MCF 10A (cell line): ENCODE measurements at regions of chr4 and their contacts with region 1.

Region 1: GRCh38 chr4:85084380-85085094 is 118.0 kb upstream of the WDFY3 start:
- DNase-seq: peak; percentile 80
- H3K4me3 Mint-ChIP-seq: no peak overlapping the region
- H3K27ac Mint-ChIP-seq: no peak overlapping the region
- H3K4me1 Mint-ChIP-seq: no peaks in the 10 kb centered on the region
- H3K27me3 Mint-ChIP-seq: no peaks in the 10 kb centered on the region
- CTCF ChIP-seq: peak; percentile 67

Region 2: GRCh38 chr4:85102606-85103005 is 18.1 kb after region 1 on chr4:
- CTCF ChIA-PET with region 1: interaction called, 21 read pairs
- POLR2A ChIA-PET with region 1: no interaction called
- intact Hi-C with region 1: no loop called
- DNase-seq: no peak
- H3K4me3 Mint-ChIP-seq: no peak overlapping the region
- H3K27ac Mint-ChIP-seq: no peak overlapping the region
- H3K4me1 Mint-ChIP-seq: peaks cover 6% of the 10 kb centered on the region
- H3K27me3 Mint-ChIP-seq: no peaks in the 10 kb centered on the region
- CTCF ChIP-seq: no peak

Region 3: GRCh38 chr4:85147439-85148076 is 63.0 kb after region 1 on chr4:
- CTCF ChIA-PET with region 1: interaction called, 23 read pairs
- POLR2A ChIA-PET with region 1: no interaction called
- intact Hi-C with region 1: loop called (anchors 2 kb)
- DNase-seq: peak; percentile 74
- H3K4me3 Mint-ChIP-seq: no peak overlapping the region
- H3K27ac Mint-ChIP-seq: no peak overlapping the region
- H3K4me1 Mint-ChIP-seq: peaks cover 11% of the 10 kb centered on the region
- H3K27me3 Mint-ChIP-seq: no peaks in the 10 kb centered on the region
- CTCF ChIP-seq: peak; percentile 68

Region 4: DNA sequence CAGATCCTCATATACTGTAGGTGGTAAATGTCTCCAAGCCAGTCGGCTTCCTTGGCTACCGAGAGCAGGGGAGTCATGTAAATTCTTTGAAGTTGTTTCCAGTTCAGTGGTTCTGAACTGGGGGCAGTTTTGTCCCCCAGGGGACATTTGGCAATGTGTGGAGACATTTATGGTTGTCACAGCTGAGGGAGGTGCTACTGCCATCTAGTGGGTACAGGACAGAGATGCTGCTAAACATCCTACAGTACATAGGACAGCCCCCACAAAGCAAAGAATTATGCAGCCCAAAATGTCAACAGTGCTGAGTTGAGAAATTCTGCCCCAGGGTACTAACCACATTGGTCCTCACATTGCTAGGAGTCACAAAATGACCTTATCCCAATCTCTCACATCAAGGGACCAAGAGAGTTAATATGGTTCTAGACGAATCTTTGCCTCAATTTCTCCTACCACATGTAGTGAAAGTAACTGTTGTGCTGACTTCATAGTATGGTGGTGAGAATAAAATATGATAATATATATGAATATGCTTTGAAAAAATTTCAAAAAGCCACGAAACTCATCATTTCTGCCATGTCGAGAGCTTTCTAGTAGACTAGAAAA is 286.0 kb after region 1 on chr4:
- CTCF ChIA-PET with region 1: interaction called, 10 read pairs
- POLR2A ChIA-PET with region 1: no interaction called
- intact Hi-C with region 1: loop called (anchors 1 kb)
- DNase-seq: peak; percentile 68
- H3K4me3 Mint-ChIP-seq: no peak overlapping the region
- H3K27ac Mint-ChIP-seq: no peak overlapping the region
- H3K4me1 Mint-ChIP-seq: no peaks in the 10 kb centered on the region
- H3K27me3 Mint-ChIP-seq: no peaks in the 10 kb centered on the region
- CTCF ChIP-seq: peak; percentile 84

Region 5: DNA sequence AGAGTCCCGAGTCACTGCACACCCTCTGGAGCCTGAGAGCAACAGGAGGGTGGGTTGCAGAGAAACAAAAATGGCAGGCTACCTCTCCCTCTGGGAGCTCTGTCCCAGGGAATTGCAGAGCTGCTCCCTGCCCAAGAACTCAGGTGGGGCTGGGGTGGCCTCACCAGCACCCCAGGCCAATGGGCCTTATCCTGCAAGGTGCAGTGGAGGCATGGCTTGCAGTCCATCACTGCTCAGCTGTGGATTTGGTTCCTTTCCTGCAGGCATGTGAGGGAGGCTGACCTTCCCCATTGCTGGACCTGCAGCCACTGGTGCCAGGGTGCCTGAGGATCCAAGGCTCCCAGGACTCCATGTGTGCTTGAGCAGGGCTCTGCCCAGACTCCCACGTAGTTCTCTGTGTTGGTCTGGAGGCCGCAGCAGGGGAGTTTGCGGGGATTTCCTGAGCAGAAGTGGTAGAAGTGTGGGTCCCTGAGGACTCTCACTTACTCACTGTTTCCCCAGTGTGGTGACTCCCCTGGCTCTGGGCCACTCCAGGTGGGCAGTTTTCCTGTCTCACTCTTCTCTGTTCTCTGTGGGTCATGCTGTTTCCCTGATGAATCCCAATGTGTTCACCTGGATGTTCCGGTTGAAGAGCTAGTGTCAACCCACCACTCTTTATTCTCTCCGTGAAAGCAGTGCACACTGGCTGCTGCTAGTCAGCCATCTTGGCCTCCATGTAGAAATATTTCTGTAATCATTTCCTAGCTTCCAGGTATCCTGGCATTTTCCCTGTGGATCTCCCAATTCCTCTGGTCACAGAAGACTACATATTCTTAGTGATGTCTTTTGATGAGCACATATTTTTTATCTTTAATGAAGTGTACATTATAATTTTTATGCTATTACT is 472.7 kb after region 1 on chr4:
- CTCF ChIA-PET with region 1: no interaction called
- POLR2A ChIA-PET with region 1: no interaction called
- intact Hi-C with region 1: no loop called
- DNase-seq: no peak
- H3K4me3 Mint-ChIP-seq: no peak overlapping the region
- H3K27ac Mint-ChIP-seq: no peak overlapping the region
- H3K4me1 Mint-ChIP-seq: peaks cover 10% of the 10 kb centered on the region
- H3K27me3 Mint-ChIP-seq: no peaks in the 10 kb centered on the region
- CTCF ChIP-seq: no peak

Region 6: DNA sequence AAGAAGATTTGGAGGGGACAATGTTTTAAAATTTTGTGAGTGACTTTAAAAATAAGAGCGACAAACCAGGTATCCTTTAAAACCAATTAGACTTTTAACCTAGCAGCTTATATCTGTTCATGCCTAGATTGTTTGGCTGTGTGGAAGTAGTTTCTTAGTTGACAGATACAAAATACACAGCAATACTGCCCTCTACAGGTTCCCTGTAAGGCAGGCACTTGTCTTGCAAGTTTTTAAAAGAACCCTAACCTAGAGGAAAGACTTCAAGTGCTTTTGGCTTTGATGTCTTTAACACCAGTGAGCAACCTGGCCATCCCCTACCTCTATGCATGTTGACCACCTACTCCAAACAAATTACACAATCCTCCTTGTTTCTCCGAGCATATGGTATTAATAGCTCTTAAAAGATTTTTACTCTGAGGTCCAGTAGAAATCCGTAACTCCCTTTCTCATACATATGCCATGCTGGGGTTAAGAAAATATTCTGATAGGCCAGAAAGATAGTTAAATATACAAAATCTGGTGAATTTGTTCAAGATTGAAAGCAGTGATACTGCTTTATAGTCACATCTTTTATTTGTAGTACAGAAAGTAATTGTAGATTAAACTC is 663.5 kb after region 1 on chr4:
- CTCF ChIA-PET with region 1: interaction called, 72 read pairs
- POLR2A ChIA-PET with region 1: interaction called, 4 read pairs
- intact Hi-C with region 1: loop called (anchors 1 kb)
- DNase-seq: peak; percentile 73
- H3K4me3 Mint-ChIP-seq: no peak overlapping the region
- H3K27ac Mint-ChIP-seq: no peak overlapping the region
- H3K4me1 Mint-ChIP-seq: peaks cover 26% of the 10 kb centered on the region
- H3K27me3 Mint-ChIP-seq: no peaks in the 10 kb centered on the region
- CTCF ChIP-seq: peak; percentile 78

Region 7: DNA sequence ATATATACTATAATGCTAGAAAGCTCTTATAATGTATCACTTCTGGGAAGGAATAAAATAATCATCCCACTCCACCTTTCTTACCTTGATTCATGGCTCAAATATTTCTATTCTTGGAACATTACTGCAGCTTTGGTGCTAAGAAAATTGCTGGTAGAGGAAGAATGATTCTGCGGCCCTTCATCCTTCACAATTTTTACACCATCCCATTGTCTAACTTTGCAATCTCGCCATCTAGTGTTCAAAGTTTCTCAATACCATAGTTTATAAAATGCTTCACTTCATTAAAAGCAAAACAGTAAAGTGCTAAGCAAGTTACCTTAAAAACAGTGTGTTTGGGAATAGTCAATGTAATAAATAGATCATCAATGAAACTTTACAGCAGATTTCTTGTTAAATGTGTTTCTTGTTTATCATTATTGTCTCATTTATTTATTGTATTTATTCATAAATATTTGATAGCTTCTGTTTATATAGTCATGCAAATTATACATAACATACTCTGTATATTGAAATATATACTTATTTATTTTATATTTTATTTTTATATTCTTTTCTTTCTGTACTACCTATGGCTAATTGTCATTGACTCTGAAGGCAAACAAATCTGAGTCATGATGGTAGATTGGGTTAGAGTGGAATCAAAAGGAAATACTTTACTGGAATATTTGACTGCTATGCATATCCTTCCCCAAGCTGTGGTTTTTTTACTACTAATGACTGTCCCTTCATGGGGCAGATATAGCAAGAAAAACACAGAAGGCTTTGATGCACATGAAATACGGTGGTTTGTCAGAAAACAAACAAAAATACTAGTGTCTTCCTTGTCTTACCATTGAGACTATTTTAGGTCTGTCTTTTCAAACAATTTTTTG is 884.6 kb after region 1 on chr4:
- CTCF ChIA-PET with region 1: interaction called, 13 read pairs
- POLR2A ChIA-PET with region 1: no interaction called
- intact Hi-C with region 1: no loop called
- DNase-seq: peak; percentile 73
- H3K4me3 Mint-ChIP-seq: no peak overlapping the region
- H3K27ac Mint-ChIP-seq: no peak overlapping the region
- H3K4me1 Mint-ChIP-seq: peaks cover 5% of the 10 kb centered on the region
- H3K27me3 Mint-ChIP-seq: no peaks in the 10 kb centered on the region
- CTCF ChIP-seq: peak; percentile 46

Region 8: GRCh38 chr4:86043755-86044592 is 959.4 kb after region 1 on chr4:
- CTCF ChIA-PET with region 1: interaction called, 12 read pairs
- POLR2A ChIA-PET with region 1: no interaction called
- intact Hi-C with region 1: loop called (anchors 2 kb)
- DNase-seq: peak; percentile 71
- H3K4me3 Mint-ChIP-seq: no peak overlapping the region
- H3K27ac Mint-ChIP-seq: no peak overlapping the region
- H3K4me1 Mint-ChIP-seq: peaks cover 5% of the 10 kb centered on the region
- H3K27me3 Mint-ChIP-seq: no peaks in the 10 kb centered on the region
- CTCF ChIP-seq: peak; percentile 66